ENCODE measurements at regions of chr19 and their contacts with region 1.

Region 1: GRCh38 chr19:17718947-17719711 is at the start of gene MAP1S:
- DNase-seq: peak; percentile 19 to 58 (median 44)
- H3K4me3 ChIP-seq: peak within 1 kb of the TSS; percentile 80 to 95 (median 81)
- H3K4me3 Mint-ChIP-seq: peak within 1 kb of the TSS; percentile 85 to 98
- H3K27ac ChIP-seq: peak within 1 kb of the TSS in 1 of 2 donors; percentile 82
- H3K27ac Mint-ChIP-seq: peak within 1 kb of the TSS; percentile 86 to 95 (median 91)
- H3K4me1 ChIP-seq: peaks cover 56 to 63% of the 10 kb centered on the region in 2 donors
- H3K4me1 Mint-ChIP-seq: peaks cover 58% of the 10 kb centered on the region
- H3K27me3 ChIP-seq: no peaks in the 10 kb centered on the region
- H3K27me3 Mint-ChIP-seq: peaks cover 0 to 4% (median 0%) of the 10 kb centered on the region in 3 donors
- CTCF ChIP-seq: no peak
- polyA plus RNA-seq, gene MAP1S: 24.5 to 28.3 (median 27.5) TPM

Region 2: GRCh38 chr19:17455308-17456123 is 263.6 kb before region 1 on chr19:
- intact Hi-C with region 1: no loop called
- DNase-seq: no peak
- H3K4me3 ChIP-seq: no peak overlapping the region
- H3K4me3 Mint-ChIP-seq: peak overlapping the region in 1 of 2 donors; percentile 70
- H3K27ac ChIP-seq: no peak overlapping the region
- H3K27ac Mint-ChIP-seq: no peak overlapping the region
- H3K4me1 ChIP-seq: peaks cover 9 to 10% of the 10 kb centered on the region in 2 donors
- H3K4me1 Mint-ChIP-seq: peaks cover 13% of the 10 kb centered on the region
- H3K27me3 ChIP-seq: peaks cover 22 to 43% of the 10 kb centered on the region in 2 donors
- H3K27me3 Mint-ChIP-seq: peaks cover 48 to 54% (median 49%) of the 10 kb centered on the region in 3 donors
- CTCF ChIP-seq: no peak

Region 3: DNA sequence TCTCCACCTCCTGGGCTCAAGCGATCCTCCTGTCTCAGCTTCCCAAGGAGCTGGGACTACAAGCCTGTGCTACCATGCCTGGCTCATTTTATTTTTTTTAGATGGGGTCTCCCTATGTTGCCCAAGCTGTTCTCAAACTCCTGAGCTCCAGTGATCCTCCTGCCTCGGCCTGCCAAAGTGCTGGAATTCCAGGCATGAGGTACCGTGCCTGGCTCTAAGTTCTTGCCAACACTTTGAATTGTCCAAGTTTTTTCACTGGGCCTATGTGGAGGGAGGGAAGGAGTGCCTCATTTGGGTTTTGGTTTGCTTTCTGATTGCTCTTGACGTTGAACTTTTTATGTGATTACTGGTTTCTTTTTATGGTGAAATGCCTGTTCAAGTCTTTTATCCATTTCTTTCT is 26.6 kb before region 1 on chr19:
- intact Hi-C with region 1: no loop called
- DNase-seq: no peak
- H3K4me3 ChIP-seq: no peak overlapping the region
- H3K4me3 Mint-ChIP-seq: no peak overlapping the region
- H3K27ac ChIP-seq: no peak overlapping the region
- H3K27ac Mint-ChIP-seq: peak overlapping the region in 1 of 7 donors; percentile 54
- H3K4me1 ChIP-seq: no peaks in the 10 kb centered on the region
- H3K4me1 Mint-ChIP-seq: peaks cover 1% of the 10 kb centered on the region
- H3K27me3 ChIP-seq: peaks cover 17 to 28% of the 10 kb centered on the region in 2 donors
- H3K27me3 Mint-ChIP-seq: peaks cover 47 to 70% (median 48%) of the 10 kb centered on the region in 3 donors
- CTCF ChIP-seq: no peak

Region 4: GRCh38 chr19:17747205-17748098 is 28.3 kb after region 1 on chr19:
- intact Hi-C with region 1: loop called in 1 of 2 experiments (anchors 2 kb)
- DNase-seq: peak; percentile 94 to 97 (median 96)
- H3K4me3 ChIP-seq: peak overlapping the region; percentile 48 to 85 (median 66)
- H3K4me3 Mint-ChIP-seq: peak overlapping the region; percentile 42 to 69
- H3K27ac ChIP-seq: peak overlapping the region in 1 of 2 donors; percentile 65
- H3K27ac Mint-ChIP-seq: peak overlapping the region in 6 of 7 donors; percentile 47 to 90 (median 80)
- H3K4me1 ChIP-seq: peaks cover 55 to 65% of the 10 kb centered on the region in 2 donors
- H3K4me1 Mint-ChIP-seq: peaks cover 55% of the 10 kb centered on the region
- H3K27me3 ChIP-seq: no peaks in the 10 kb centered on the region
- H3K27me3 Mint-ChIP-seq: peaks cover 0 to 3% (median 0%) of the 10 kb centered on the region in 3 donors
- CTCF ChIP-seq: no peak

Region 5: GRCh38 chr19:17775245-17775916 is 56.3 kb after region 1 on chr19:
- intact Hi-C with region 1: loop called in 1 of 2 experiments (anchors 5 kb)
- DNase-seq: peak in 1 of 3 donors; percentile 40
- H3K4me3 ChIP-seq: no peak overlapping the region
- H3K4me3 Mint-ChIP-seq: no peak overlapping the region
- H3K27ac ChIP-seq: no peak overlapping the region
- H3K27ac Mint-ChIP-seq: peak overlapping the region in 3 of 7 donors; percentile 15 to 54 (median 52)
- H3K4me1 ChIP-seq: peaks cover 14 to 23% of the 10 kb centered on the region in 2 donors
- H3K4me1 Mint-ChIP-seq: peaks cover 23% of the 10 kb centered on the region
- H3K27me3 ChIP-seq: no peaks in the 10 kb centered on the region
- H3K27me3 Mint-ChIP-seq: peaks cover 0 to 2% (median 0%) of the 10 kb centered on the region in 3 donors
- CTCF ChIP-seq: peak; percentile 76

Region 6: GRCh38 chr19:17830567-17831418 is 111.7 kb after region 1 on chr19:
- intact Hi-C with region 1: no loop called
- DNase-seq: no peak
- H3K4me3 ChIP-seq: no peak overlapping the region
- H3K4me3 Mint-ChIP-seq: no peak overlapping the region
- H3K27ac ChIP-seq: no peak overlapping the region
- H3K27ac Mint-ChIP-seq: peak overlapping the region in 2 of 7 donors; percentile 31 to 64
- H3K4me1 ChIP-seq: peaks cover 12 to 17% of the 10 kb centered on the region in 2 donors
- H3K4me1 Mint-ChIP-seq: peaks cover 11% of the 10 kb centered on the region
- H3K27me3 ChIP-seq: no peaks in the 10 kb centered on the region
- H3K27me3 Mint-ChIP-seq: no peaks in the 10 kb centered on the region
- CTCF ChIP-seq: no peak

Measured in CD14-positive monocyte (primary cell).